ENCODE measurements at regions of chr15 and their contacts with region 1.

Region 1: DNA sequence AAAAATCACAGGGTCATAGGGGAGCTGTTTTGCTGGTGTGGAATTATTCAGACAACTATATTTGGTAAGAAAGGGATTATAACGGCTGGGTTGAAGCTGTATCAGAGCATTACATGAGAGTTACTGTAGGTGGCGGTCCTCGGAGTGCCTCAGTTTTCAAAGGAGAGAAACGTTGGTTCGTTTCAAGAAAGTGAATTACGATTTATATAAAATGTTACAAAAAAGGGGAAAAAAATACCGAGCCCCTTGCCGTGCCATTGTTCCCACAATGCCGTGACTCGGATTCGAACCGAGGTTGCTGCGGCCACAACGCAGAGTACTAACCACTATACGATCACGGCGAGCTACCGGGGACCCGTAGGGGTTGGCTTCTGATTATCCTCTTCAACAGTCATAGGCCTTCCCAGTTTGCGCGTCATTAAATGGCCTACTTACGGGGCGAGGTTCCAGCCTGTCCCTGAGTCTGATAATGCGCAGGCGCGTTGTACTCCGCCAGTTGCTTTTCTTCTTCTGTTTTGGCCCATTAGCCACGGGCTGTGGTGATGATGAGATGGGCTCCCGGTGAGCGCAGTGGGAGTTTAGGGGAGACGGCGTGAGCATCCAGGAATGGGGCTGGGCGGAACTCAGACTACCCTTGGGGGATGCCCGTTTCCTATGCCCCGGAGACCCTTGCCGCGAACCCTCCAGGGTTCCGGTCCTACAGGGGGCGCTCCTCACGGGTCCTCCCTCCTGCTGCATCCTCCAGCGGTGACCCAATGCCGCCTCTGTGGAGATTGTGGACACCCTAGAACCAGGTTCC is 10.8 kb upstream of the SHF start:
- DNase-seq: peak; percentile 90 to 99 (median 93)
- ATAC-seq: peak; percentile 61
- H3K4me3 ChIP-seq: peak overlapping the region; percentile 82 to 88
- H3K4me3 Mint-ChIP-seq: no peak overlapping the region
- H3K27ac ChIP-seq: peak overlapping the region; percentile 92 to 96
- H3K27ac Mint-ChIP-seq: no peak overlapping the region
- H3K4me1 ChIP-seq: peaks cover 11% of the 10 kb centered on the region
- H3K4me1 Mint-ChIP-seq: peaks cover 13% of the 10 kb centered on the region
- H3K27me3 ChIP-seq: no peaks in the 10 kb centered on the region
- H3K27me3 Mint-ChIP-seq: no peaks in the 10 kb centered on the region
- CTCF ChIP-seq: peak; percentile 54

Region 2: GRCh38 chr15:43791993-43792760 is 1406.4 kb before region 1 on chr15 and contains the start of gene SERF2:
- CTCF ChIA-PET with region 1: no interaction called
- POLR2A ChIA-PET with region 1: no interaction called
- intact Hi-C with region 1: loop called in 1 of 2 experiments (anchors 5 kb)
- DNase-seq: peak; percentile 99 to 100 (median 99)
- ATAC-seq: peak; percentile 95
- H3K4me3 ChIP-seq: peak within 1 kb of the TSS; percentile 90 to 98
- H3K4me3 Mint-ChIP-seq: peak within 1 kb of the TSS; percentile 96
- H3K27ac ChIP-seq: peak within 1 kb of the TSS; percentile 98
- H3K27ac Mint-ChIP-seq: peak within 1 kb of the TSS; percentile 97
- H3K4me1 ChIP-seq: peaks cover 38% of the 10 kb centered on the region
- H3K4me1 Mint-ChIP-seq: peaks cover 42% of the 10 kb centered on the region
- H3K27me3 ChIP-seq: no peaks in the 10 kb centered on the region
- H3K27me3 Mint-ChIP-seq: no peaks in the 10 kb centered on the region
- CTCF ChIP-seq: no peak
- total RNA-seq, gene SERF2: 322 TPM

Region 3: GRCh38 chr15:44536962-44537734 is 661.4 kb before region 1 on chr15 and contains the start of gene EIF3J:
- CTCF ChIA-PET with region 1: no interaction called
- POLR2A ChIA-PET with region 1: no interaction called
- intact Hi-C with region 1: loop called (anchors 2 to 5 kb)
- DNase-seq: peak; percentile 88 to 99 (median 95)
- ATAC-seq: peak; percentile 88
- H3K4me3 ChIP-seq: peak within 1 kb of the TSS; percentile 83 to 98
- H3K4me3 Mint-ChIP-seq: peak within 1 kb of the TSS; percentile 95
- H3K27ac ChIP-seq: peak within 1 kb of the TSS; percentile 85 to 92
- H3K27ac Mint-ChIP-seq: peak within 1 kb of the TSS; percentile 96
- H3K4me1 ChIP-seq: peaks cover 42% of the 10 kb centered on the region
- H3K4me1 Mint-ChIP-seq: peaks cover 54% of the 10 kb centered on the region
- H3K27me3 ChIP-seq: no peaks in the 10 kb centered on the region
- H3K27me3 Mint-ChIP-seq: no peaks in the 10 kb centered on the region
- CTCF ChIP-seq: no peak
- total RNA-seq, gene EIF3J: 63.7 to 68.9 TPM

Region 4: DNA sequence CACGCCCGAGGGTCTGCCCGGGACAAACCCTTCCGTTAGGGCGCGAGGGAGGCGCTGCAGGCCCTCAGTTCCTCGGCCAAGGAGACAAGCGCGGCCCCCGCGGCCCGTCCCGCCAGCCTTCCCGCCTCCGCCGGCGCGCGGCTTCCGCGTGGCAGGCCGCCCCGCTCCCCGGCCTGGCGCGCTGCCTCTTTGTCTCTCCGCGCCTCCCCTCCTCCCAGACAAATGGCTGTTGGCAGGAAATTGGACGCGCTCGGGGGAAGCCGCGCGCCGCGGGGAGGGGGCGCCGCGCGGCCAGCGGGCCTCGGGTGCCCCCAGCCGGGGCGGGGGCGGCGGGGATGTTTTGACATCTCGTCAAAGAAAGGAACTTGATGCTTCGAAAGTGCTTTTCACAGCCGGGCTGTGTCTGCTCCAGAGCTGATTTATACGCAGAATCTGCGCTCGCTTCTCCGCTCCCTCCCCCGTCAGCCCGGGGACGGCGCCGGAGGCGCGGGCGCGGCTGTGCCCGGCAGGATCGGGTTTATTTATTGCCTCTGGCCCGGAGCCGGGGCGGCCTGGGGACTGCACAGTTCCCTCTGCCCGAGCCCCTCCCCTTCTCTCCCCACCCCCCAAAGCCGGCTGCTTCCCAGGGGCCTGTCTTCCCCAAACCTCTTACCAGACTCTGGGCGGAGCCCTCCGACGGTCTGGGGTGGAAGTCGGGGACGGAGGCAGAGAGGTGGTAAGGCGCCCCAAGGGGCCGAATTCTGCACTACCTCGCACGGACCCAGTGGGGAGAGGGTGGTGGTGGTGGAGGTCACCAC is 31.5 kb before region 1 on chr15:
- CTCF ChIA-PET with region 1: interaction called, 13 read pairs
- POLR2A ChIA-PET with region 1: interaction called, 33 read pairs
- intact Hi-C with region 1: loop called (anchors 1 kb)
- DNase-seq: peak; percentile 64 to 90 (median 84)
- ATAC-seq: peak; percentile 90
- H3K4me3 ChIP-seq: peak overlapping the region; percentile 73 to 81
- H3K4me3 Mint-ChIP-seq: peak overlapping the region; percentile 81
- H3K27ac ChIP-seq: peak overlapping the region; percentile 86 to 87
- H3K27ac Mint-ChIP-seq: peak overlapping the region; percentile 87
- H3K4me1 ChIP-seq: peaks cover 17% of the 10 kb centered on the region
- H3K4me1 Mint-ChIP-seq: peaks cover 19% of the 10 kb centered on the region
- H3K27me3 ChIP-seq: no peaks in the 10 kb centered on the region
- H3K27me3 Mint-ChIP-seq: no peaks in the 10 kb centered on the region
- CTCF ChIP-seq: peak; percentile 47

Region 5: DNA sequence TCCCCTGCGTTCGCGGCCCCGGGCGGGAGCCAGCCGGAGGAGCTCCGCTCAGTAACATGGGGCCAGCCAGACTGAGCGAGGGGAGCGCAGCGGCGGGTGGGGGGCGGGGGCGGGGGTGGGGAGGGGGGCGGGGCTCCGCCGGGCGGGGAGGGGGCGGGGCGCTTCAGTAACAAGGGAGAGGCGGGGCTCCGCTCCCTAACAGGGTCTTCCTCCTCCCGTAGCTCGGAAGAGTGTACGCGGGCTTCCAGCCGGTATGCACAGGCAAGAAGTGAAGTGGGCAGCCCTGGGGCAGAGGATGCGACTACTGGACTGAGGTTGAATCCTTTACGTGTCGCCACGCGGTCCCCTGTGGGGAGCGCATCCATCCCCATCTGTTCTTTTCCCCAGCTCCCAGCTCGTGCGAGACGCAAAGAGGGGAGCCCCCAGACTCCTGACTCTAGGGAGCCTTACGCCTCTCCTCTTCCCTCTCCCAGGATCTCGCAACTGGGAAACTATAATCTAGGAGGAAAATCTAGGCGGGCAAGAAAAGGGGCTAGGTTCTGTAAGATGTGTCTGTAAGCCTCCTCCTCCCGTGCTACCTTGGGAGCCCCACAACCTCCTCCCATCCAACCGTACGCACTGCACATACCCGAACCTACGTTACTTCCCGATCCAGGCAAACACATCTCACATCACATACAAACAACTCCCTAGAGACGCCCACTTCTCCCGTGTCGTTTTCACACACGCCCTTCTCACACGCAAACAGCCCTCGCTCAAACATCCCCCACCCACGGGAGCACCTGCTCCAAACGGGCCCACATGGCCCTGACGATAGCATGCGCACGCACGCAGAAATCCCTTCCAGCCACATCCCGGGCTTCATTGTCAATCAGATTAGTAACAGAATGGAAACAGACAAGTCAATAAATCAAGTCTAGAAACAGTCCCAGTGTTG is 10.4 kb before region 1 on chr15 and contains the start of gene SHF:
- CTCF ChIA-PET with region 1: interaction called, 19 read pairs
- POLR2A ChIA-PET with region 1: interaction called, 107 read pairs
- intact Hi-C with region 1: loop called (anchors 1 kb)
- DNase-seq: peak; percentile 24 to 87 (median 68)
- ATAC-seq: peak; percentile 79
- H3K4me3 ChIP-seq: peak within 1 kb of the TSS; percentile 84 to 99
- H3K4me3 Mint-ChIP-seq: peak within 1 kb of the TSS; percentile 89
- H3K27ac ChIP-seq: peak within 1 kb of the TSS; percentile 71 to 73
- H3K27ac Mint-ChIP-seq: peak within 1 kb of the TSS; percentile 90
- H3K4me1 ChIP-seq: peaks cover 16% of the 10 kb centered on the region
- H3K4me1 Mint-ChIP-seq: peaks cover 26% of the 10 kb centered on the region
- H3K27me3 ChIP-seq: no peaks in the 10 kb centered on the region
- H3K27me3 Mint-ChIP-seq: no peaks in the 10 kb centered on the region
- CTCF ChIP-seq: no peak
- total RNA-seq, gene SHF: 5.0 to 5.6 TPM

Region 6: DNA sequence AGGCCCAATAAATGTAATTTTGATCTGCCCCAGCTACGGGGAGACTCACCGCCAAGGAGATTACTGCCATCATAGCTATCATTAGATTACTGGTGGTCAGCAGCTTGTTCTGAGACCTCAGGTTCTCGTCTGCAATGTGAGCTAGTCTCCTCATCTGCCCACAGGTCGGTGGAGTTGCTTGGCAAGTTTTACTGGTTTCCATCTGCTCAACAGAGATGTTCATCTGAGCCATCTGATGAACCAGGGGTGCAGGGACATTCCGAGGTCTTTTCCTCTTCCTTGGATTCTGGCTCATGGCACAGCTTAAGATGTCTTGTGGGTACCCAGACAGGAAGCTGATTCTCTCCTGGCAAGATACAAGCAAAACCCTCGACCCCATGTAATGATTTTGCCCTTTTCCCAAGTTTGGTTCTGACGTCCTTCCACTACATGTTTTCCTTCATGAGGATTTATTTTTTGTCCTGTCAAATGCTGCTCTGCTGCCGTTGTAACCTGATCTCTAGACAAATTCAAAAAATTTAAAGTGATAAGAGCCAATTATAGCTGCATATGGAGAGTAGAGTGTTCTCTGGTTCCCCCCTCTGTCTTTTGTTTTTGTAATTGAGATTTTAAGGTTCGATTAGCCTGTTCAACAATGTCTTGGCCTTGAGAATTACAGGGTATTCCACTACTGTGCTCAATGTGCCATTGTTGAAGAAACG is 38.4 kb after region 1 on chr15:
- CTCF ChIA-PET with region 1: no interaction called
- POLR2A ChIA-PET with region 1: no interaction called
- intact Hi-C with region 1: no loop called
- DNase-seq: no peak
- ATAC-seq: no peak
- H3K4me3 ChIP-seq: no peak overlapping the region
- H3K4me3 Mint-ChIP-seq: no peak overlapping the region
- H3K27ac ChIP-seq: no peak overlapping the region
- H3K27ac Mint-ChIP-seq: no peak overlapping the region
- H3K4me1 ChIP-seq: no peaks in the 10 kb centered on the region
- H3K4me1 Mint-ChIP-seq: no peaks in the 10 kb centered on the region
- H3K27me3 ChIP-seq: no peaks in the 10 kb centered on the region
- H3K27me3 Mint-ChIP-seq: peaks cover 3% of the 10 kb centered on the region
- CTCF ChIP-seq: no peak

Region 7: GRCh38 chr15:45457641-45458433 is 259.3 kb after region 1 on chr15:
- CTCF ChIA-PET with region 1: interaction called, 6 read pairs
- POLR2A ChIA-PET with region 1: interaction called, 4 read pairs
- intact Hi-C with region 1: loop called (anchors 2 to 5 kb)
- DNase-seq: peak; percentile 43 to 90 (median 79)
- ATAC-seq: peak; percentile 65
- H3K4me3 ChIP-seq: peak overlapping the region; percentile 53 to 57
- H3K4me3 Mint-ChIP-seq: peak overlapping the region; percentile 84
- H3K27ac ChIP-seq: peak overlapping the region; percentile 24 to 61
- H3K27ac Mint-ChIP-seq: peak overlapping the region; percentile 87
- H3K4me1 ChIP-seq: peaks cover 24% of the 10 kb centered on the region
- H3K4me1 Mint-ChIP-seq: peaks cover 42% of the 10 kb centered on the region
- H3K27me3 ChIP-seq: no peaks in the 10 kb centered on the region
- H3K27me3 Mint-ChIP-seq: no peaks in the 10 kb centered on the region
- CTCF ChIP-seq: peak; percentile 93

Region 8: GRCh38 chr15:45587095-45587860 is 388.7 kb after region 1 on chr15 and contains the start of gene BLOC1S6:
- CTCF ChIA-PET with region 1: no interaction called
- POLR2A ChIA-PET with region 1: interaction called, 13 read pairs
- intact Hi-C with region 1: loop called in 1 of 2 experiments (anchors 2 kb)
- DNase-seq: peak; percentile 83 to 95 (median 90)
- ATAC-seq: peak; percentile 77
- H3K4me3 ChIP-seq: peak within 1 kb of the TSS; percentile 82 to 86
- H3K4me3 Mint-ChIP-seq: peak within 1 kb of the TSS; percentile 100
- H3K27ac ChIP-seq: peak within 1 kb of the TSS; percentile 93 to 98
- H3K27ac Mint-ChIP-seq: peak within 1 kb of the TSS; percentile 100
- H3K4me1 ChIP-seq: peaks cover 32% of the 10 kb centered on the region
- H3K4me1 Mint-ChIP-seq: peaks cover 50% of the 10 kb centered on the region
- H3K27me3 ChIP-seq: no peaks in the 10 kb centered on the region
- H3K27me3 Mint-ChIP-seq: no peaks in the 10 kb centered on the region
- CTCF ChIP-seq: no peak
- total RNA-seq, gene BLOC1S6: 78.1 to 78.9 TPM

Measured in CD8-positive, alpha-beta T cell (primary cell).